Left cardiac atrium (tissue), 4 donors: ENCODE measurements at regions of chr4 and their contacts with region 1.

Region 1: DNA sequence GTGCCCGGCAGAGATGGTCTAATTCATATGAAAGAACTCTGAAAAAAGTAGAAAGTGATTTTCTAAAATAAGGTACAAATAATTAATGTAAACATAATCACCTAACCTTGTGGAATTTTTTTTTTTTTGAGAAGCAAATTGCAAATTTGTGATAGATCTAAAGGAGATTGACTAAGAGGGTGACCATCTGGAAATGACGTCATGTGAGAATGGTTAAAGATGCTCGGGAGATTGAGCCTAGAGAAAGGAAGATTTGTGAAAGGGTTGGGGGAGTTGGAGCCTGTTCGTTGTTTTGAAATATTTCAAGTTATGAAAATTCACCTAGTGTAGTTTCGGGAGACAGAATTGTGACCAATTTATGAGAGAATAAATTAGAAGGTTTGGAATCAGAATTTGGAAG is 115.7 kb upstream of the ANK2 start:
- DNase-seq: no peak
- ATAC-seq: no peak

Region 2: GRCh38 chr4:113003841-113004240 is 70.1 kb after region 1 on chr4:
- intact Hi-C with region 1: loop called in 1 of 2 experiments (anchors 2 kb)
- DNase-seq: no peak
- ATAC-seq: no peak